Mammary epithelial cell (primary cell): ENCODE measurements at regions of chr20 and their contacts with region 1.

Region 1: DNA sequence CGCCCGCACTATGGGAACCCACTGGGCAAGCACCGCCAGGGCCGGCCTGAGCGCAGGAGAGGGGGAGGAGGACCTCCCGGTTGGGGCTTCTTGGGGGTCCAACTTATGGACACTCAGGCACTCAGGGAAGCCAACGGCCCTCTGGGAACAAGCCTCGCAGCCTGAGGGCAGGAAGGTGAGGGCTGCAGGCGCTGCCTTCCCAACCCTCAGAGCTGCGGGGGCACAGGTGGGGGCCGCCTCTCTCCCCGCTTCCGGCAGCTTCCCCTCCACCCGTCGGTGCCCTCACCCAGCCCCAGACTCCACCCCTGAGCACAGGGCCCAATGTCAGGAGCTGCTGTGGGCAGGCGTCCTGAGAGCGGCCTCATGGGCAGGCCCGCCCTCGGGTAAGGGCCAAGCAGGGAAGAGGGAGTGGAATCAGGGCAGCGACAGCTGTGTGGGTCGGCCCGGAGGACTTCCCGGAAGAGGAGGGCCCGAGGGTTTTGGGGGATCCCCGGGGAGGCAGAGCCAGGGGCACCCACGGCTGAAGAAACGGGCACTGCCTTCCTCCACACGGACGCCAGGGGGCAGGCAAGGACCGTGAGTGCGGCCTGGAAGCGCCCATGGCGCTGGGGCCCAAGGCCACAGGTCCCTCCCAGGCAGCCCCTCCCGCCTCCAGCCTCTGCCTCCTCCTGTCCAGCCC is 488 bp upstream of the PTK6 start:
- DNase-seq: peak; percentile 93
- H3K4me3 ChIP-seq: peak overlapping the region in 1 of 3 experiments; percentile 28
- H3K27ac ChIP-seq: peak overlapping the region; percentile 19
- H3K4me1 ChIP-seq: peaks cover 56% of the 10 kb centered on the region
- H3K27me3 ChIP-seq: no peaks in the 10 kb centered on the region
- CTCF ChIP-seq: peak; percentile 82 to 98

Region 2: DNA sequence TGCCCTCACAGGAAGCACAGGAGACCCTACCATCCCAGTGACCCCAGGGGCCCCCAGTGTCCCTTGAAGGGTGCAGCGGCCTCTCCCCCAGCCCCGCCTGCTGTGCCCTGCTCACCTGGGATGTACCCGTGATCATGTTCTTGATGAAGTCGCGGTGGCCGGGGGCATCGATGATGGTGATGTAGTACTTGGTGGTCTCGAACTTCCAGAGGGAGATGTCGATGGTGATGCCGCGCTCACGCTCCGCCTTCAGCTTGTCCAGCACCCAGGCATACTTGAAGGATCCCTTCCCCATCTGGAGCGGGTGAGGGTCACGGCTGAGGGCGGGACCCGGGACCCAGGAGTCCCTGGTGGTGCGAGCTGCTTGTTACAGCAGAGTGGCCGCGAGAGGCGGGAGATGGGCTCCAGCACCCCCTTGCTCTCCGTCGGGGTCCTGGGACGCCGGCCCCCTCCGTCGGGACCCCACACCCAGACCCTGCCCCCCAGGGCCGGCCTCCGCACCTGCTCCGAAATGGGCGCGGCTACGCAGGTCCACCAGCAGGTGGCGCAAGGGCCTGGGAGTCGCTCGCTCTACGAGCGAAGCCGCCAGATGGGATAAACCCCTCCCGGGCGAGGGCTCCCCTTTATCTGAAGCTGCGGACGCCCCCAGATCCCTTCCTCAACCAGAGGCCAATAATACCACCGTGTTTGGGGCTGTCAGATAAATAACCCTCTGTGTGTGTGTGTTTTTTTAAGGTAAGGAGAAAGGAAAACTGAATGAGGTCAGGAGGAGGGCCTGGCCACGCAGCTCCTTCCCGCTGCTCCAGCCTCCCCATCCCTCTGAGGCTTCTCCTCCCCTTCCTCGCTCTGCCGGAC is 41.7 kb before region 1 on chr20:
- CTCF ChIA-PET with region 1: no interaction called
- dilution Hi-C with region 1: no loop called
- in situ Hi-C with region 1: no loop called
- intact Hi-C with region 1: loop called (anchors 1 kb)
- DNase-seq: peak; percentile 35
- H3K4me3 ChIP-seq: peak overlapping the region in 1 of 3 experiments; percentile 28
- H3K27ac ChIP-seq: no peak overlapping the region
- H3K4me1 ChIP-seq: peaks cover 10% of the 10 kb centered on the region
- H3K27me3 ChIP-seq: peaks cover 5% of the 10 kb centered on the region
- CTCF ChIP-seq: peak; percentile 66 to 93

Region 3: GRCh38 chr20:63612276-63612928 is 74.7 kb after region 1 on chr20:
- CTCF ChIA-PET with region 1: no interaction called
- dilution Hi-C with region 1: loop called (anchors 5 kb)
- in situ Hi-C with region 1: no loop called
- intact Hi-C with region 1: no loop called
- DNase-seq: no peak
- H3K4me3 ChIP-seq: no peak overlapping the region
- H3K27ac ChIP-seq: no peak overlapping the region
- H3K4me1 ChIP-seq: no peaks in the 10 kb centered on the region
- H3K27me3 ChIP-seq: no peaks in the 10 kb centered on the region
- CTCF ChIP-seq: no peak

Region 4: DNA sequence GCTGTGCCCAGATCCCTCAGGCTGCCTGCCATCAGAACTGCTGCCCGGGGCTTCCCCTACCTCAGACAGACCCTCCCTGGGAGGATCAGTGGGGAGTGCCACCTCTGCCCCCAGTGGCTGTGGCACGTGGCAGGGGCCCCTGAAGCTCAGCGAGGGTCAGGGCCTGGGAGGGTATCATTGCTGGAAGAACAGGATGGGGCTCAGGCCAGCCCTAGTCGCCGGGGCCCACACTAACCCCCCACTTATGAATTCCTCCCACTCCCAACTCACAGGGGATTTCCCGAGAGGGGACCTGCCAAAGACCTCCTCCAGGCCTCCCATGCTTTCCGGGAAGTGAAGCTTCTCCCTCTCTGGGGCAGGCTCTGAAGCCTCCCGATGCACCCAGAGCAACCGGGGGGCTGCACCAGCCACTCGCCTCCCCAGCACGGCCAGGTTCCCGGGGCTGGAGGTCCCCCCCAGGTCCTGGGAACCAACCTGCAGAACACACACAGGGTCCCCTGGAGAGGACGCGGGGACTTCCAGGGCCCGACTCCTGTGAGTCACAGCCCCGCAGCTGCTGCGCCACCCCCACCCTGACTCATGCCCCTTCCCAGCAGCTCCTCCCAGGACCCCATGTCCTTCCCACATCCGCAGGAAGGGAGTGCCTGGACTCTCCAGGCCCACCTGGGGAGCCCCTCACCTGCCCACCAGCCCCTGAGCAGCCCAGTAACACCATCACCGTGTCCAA is 161.2 kb after region 1 on chr20:
- CTCF ChIA-PET with region 1: no interaction called
- dilution Hi-C with region 1: loop called (anchors 5 kb)
- in situ Hi-C with region 1: no loop called
- intact Hi-C with region 1: loop called (anchors 5 kb)
- DNase-seq: peak; percentile 94
- H3K4me3 ChIP-seq: peak overlapping the region; percentile 47 to 72 (median 47)
- H3K27ac ChIP-seq: peak overlapping the region; percentile 60
- H3K4me1 ChIP-seq: peaks cover 72% of the 10 kb centered on the region
- H3K27me3 ChIP-seq: no peaks in the 10 kb centered on the region
- CTCF ChIP-seq: no peak

Region 5: GRCh38 chr20:63864847-63865640 is 327.4 kb after region 1 on chr20 and contains the start of gene TPD52L2:
- CTCF ChIA-PET with region 1: no interaction called
- dilution Hi-C with region 1: no loop called
- in situ Hi-C with region 1: no loop called
- intact Hi-C with region 1: loop called (anchors 2 kb)
- DNase-seq: peak; percentile 100
- H3K4me3 ChIP-seq: peak within 1 kb of the TSS; percentile 85 to 94 (median 92)
- H3K27ac ChIP-seq: peak within 1 kb of the TSS; percentile 95
- H3K4me1 ChIP-seq: peaks cover 12% of the 10 kb centered on the region
- H3K27me3 ChIP-seq: no peaks in the 10 kb centered on the region
- CTCF ChIP-seq: no peak
- total RNA-seq, gene TPD52L2: 122 to 150 TPM

Region 6: GRCh38 chr20:63973636-63974402 is 436.2 kb after region 1 on chr20:
- CTCF ChIA-PET with region 1: interaction called, 5 read pairs
- dilution Hi-C with region 1: no loop called
- in situ Hi-C with region 1: loop called in 1 of 2 experiments (anchors 10 kb)
- intact Hi-C with region 1: loop called (anchors 1 kb)
- DNase-seq: peak; percentile 65
- H3K4me3 ChIP-seq: peak overlapping the region in 2 of 3 experiments; percentile 41 to 47
- H3K27ac ChIP-seq: no peak overlapping the region
- H3K4me1 ChIP-seq: peaks cover 25% of the 10 kb centered on the region
- H3K27me3 ChIP-seq: no peaks in the 10 kb centered on the region
- CTCF ChIP-seq: peak; percentile 89 to 97

Region 7: DNA sequence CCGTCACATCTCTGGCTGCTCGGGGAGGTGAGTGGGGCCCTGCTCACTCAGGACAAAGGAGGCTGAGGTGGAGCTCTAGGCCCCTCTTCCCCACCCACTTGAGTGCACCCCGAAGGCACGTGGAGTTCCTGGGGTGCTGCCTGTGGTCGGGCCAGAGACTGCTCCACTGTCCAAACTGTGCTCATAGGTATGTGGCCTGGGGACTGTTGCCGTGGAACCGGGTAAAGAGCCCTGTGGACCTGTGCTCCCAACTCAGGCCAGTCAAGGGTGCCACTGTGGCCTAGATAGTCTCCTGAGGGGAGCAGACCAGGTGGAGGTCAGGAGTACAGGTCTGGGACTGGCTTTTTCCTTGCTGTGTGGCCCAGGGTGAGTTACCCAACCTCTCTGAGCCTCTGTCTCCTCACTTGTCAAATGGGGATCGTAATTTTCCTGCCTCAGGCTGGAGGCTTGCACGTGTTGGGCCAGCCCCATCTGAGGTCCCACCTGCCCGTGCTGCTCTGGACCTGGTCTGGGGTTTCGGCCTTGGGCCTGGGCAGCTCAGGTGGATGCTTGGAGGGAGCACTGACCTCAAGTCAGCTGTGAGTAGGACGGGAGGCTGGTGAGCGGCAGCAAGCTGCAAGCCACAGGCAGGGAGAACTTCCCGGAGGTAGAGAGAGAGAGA is 582.1 kb after region 1 on chr20:
- CTCF ChIA-PET with region 1: no interaction called
- dilution Hi-C with region 1: no loop called
- in situ Hi-C with region 1: no loop called
- intact Hi-C with region 1: loop called (anchors 5 kb)
- DNase-seq: no peak
- H3K4me3 ChIP-seq: no peak overlapping the region
- H3K27ac ChIP-seq: no peak overlapping the region
- H3K4me1 ChIP-seq: no peaks in the 10 kb centered on the region
- H3K27me3 ChIP-seq: no peaks in the 10 kb centered on the region
- CTCF ChIP-seq: no peak